PC-3 (cell line): ENCODE measurements at regions of chrX and their contacts with region 1.

Region 1: DNA sequence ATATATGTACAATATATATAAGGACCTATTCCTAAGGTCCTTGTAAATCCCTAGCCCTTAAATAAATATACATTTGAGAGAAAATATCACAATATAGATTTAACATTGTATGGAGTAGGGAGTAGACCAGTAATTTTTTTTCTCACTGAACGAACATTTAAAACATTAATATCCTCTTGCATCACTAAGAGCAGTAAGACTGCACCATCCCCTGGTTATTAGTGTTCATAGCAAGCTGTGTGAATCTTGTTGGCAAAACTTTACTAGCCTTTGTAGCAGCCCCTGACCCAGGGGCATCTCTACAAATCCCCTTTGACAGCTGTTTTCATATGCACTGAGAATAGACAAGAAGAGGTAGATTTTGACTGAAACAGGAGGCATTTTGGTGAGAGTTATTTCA is 146.5 kb downstream of the IL1RAPL2 start:
- DNase-seq: peak; percentile 40
- ATAC-seq: peak; percentile 54
- H3K4me3 ChIP-seq: no peak overlapping the region
- H3K27ac ChIP-seq: no peak overlapping the region
- H3K4me1 ChIP-seq: peaks cover 15% of the 10 kb centered on the region
- H3K27me3 ChIP-seq: no peaks in the 10 kb centered on the region
- CTCF ChIP-seq: peak; percentile 47

Region 2: GRCh38 chrX:104522386-104522785 is 190.1 kb before region 1 on chrX:
- CTCF ChIA-PET with region 1: no interaction called
- POLR2A ChIA-PET with region 1: no interaction called
- intact Hi-C with region 1: no loop called
- DNase-seq: no peak
- ATAC-seq: no peak
- H3K4me3 ChIP-seq: no peak overlapping the region
- H3K27ac ChIP-seq: no peak overlapping the region
- H3K4me1 ChIP-seq: 0 out of 2 replicates have a peak, but pooled peaks cover 3% of the 10 kb centered on the region
- H3K27me3 ChIP-seq: no peaks in the 10 kb centered on the region
- CTCF ChIP-seq: no peak

Region 3: DNA sequence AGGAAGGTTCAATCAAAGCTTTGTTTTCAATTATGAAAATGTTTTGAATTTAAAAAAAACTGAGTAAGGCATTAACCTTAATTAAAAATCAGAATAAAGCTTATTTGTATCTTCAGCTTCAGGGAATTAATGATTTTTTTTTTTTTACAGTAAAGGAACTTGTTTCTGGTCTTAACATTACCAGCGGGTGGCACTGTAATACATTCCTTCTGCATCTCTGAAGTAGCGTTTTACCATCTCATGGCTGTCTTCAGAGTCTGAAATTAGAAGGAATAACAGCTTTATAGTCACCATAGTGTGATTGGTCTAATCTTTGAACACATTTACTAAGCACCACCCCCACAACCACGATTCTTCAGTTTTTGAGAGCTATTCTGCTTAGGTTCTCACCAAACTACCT is 44.0 kb before region 1 on chrX:
- CTCF ChIA-PET with region 1: interaction called, 9 read pairs
- POLR2A ChIA-PET with region 1: no interaction called
- intact Hi-C with region 1: loop called (anchors 1 kb)
- DNase-seq: peak; percentile 57
- ATAC-seq: peak; percentile 57; the same call in 1 of the 2 replicates
- H3K4me3 ChIP-seq: no peak overlapping the region
- H3K27ac ChIP-seq: no peak overlapping the region
- H3K4me1 ChIP-seq: no peaks in the 10 kb centered on the region
- H3K27me3 ChIP-seq: no peaks in the 10 kb centered on the region
- CTCF ChIP-seq: peak; percentile 63

Region 4: GRCh38 chrX:104750061-104750571 is 37.6 kb after region 1 on chrX:
- CTCF ChIA-PET with region 1: no interaction called
- POLR2A ChIA-PET with region 1: no interaction called
- intact Hi-C with region 1: no loop called
- DNase-seq: peak; percentile 52
- ATAC-seq: peak; percentile 22; the same call in 1 of the 2 replicates
- H3K4me3 ChIP-seq: no peak overlapping the region
- H3K27ac ChIP-seq: peak overlapping the region; percentile 57
- H3K4me1 ChIP-seq: peaks cover 11% of the 10 kb centered on the region
- H3K27me3 ChIP-seq: no peaks in the 10 kb centered on the region
- CTCF ChIP-seq: no peak

Region 5: DNA sequence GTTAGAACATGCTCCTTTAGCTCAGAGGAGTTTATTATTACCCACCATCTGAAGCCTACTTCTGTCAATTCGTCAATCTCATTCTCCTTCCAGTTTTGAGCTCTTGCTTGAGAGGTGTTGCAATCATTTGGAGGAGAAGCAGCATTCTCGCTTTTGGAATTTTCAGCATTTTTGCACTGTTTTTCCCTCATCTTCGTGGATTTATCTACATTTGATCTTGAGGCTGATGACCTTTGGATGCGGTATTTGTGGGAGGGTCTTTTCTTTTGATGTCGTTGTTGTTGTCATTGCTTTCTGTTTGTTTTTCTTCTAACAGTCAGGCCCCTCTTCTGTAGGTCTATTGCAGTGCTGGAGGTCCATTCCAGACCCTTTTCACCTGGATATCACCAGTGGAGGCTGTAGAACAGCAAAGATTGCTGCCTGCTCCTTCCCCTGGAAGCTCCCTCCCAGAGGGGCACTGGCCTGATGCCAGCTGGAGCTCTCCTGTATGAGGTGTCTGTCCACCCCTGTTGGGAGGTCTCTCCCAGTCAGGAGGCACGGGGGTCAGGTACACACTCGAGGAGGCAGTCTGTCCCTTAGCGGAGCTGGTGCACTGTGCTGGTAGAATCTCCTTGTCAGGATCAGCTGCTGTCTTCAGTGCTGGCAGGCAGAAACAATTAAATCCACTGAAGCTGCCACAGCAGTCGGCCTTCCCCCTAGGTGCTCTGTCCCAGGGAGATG is 130.0 kb after region 1 on chrX:
- CTCF ChIA-PET with region 1: no interaction called
- POLR2A ChIA-PET with region 1: no interaction called
- intact Hi-C with region 1: no loop called
- DNase-seq: no peak
- ATAC-seq: no peak
- H3K4me3 ChIP-seq: no peak overlapping the region
- H3K27ac ChIP-seq: no peak overlapping the region
- H3K4me1 ChIP-seq: no peaks in the 10 kb centered on the region
- H3K27me3 ChIP-seq: no peaks in the 10 kb centered on the region
- CTCF ChIP-seq: no peak